Activated CD4-positive, alpha-beta memory T cell treated with anti-CD3 and anti-CD28 coated beads for 36 hours (primary cell): ENCODE measurements at regions of chr12 and their contacts with region 1.

Region 1: DNA sequence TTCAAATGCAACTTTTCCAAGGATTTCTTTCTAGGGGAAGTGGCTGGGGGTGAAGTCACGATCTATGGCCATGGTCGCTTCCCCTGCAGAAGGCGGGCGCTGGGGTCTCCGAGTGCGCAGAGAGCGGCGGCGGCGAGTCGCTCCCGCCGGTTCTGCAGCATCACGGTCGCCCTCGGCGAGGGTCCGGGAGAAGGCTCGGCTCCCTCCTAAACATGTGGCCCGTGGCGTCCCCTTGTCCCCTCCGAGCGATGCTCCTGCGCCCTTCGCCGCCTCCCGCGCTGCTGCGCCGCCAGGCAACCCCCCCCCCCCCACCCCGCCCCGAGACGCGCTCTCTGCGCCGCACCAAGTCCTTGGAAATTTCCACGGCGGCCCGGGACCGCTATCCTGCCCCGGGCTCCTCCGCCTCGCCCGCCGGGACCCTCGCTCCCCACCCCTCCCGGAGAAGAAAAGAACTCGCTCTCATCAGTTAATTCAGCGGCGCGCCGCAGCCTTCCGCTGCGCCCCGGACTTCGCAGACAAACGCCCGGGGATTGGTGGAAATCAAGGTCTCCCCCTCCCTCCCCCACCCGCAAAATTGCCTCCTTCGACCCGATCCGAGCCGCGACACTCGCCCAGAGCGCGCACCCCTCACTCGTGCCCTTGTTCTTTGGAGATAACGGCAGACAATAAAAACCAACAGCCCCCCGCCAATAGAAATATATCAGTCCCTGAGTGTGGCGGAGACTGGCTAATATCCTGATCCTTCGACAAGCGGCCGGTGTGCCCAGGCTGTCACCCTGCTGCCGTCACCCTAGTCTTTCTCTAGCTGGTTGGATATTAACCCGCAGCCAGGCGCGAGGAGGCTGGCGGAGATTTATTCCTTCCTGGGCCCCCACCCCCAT is at the start of gene ST8SIA1:
- DNase-seq: peak; percentile 78
- H3K4me3 Mint-ChIP-seq: peak within 1 kb of the TSS; percentile 90
- H3K27ac Mint-ChIP-seq: peak within 1 kb of the TSS; percentile 89
- H3K4me1 Mint-ChIP-seq: peaks cover 49% of the 10 kb centered on the region
- H3K27me3 Mint-ChIP-seq: no peaks in the 10 kb centered on the region
- total RNA-seq, gene ST8SIA1: 9.5 to 9.6 TPM

Region 2: GRCh38 chr12:21697904-21698630 is 636.6 kb before region 1 on chr12:
- CTCF ChIA-PET with region 1: interaction called, 8 read pairs
- POLR2A ChIA-PET with region 1: no interaction called
- intact Hi-C with region 1: loop called (anchors 5 kb)
- DNase-seq: no peak
- H3K4me3 Mint-ChIP-seq: no peak overlapping the region
- H3K27ac Mint-ChIP-seq: no peak overlapping the region
- H3K4me1 Mint-ChIP-seq: peaks cover 12% of the 10 kb centered on the region
- H3K27me3 Mint-ChIP-seq: no peaks in the 10 kb centered on the region

Region 3: DNA sequence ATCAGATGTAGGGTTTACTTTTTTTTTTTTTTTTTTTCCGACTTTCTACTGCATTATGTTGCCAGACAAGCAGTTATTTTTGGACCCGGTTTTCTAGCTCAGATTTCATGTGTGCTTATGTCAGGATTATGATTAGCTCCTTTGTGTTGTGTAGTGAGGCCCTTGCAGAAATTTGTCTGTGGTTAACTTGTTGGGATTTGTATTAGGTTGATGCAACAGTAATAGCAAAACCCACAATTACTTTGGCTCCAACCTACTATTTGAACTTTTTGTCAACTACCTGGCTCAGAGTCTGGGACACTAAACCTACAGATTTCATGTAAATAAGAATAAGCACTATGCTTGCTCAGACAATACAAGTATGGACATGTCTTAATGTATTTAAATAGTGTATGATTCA is 516.0 kb before region 1 on chr12:
- CTCF ChIA-PET with region 1: no interaction called
- POLR2A ChIA-PET with region 1: no interaction called
- intact Hi-C with region 1: no loop called
- DNase-seq: no peak
- H3K4me3 Mint-ChIP-seq: no peak overlapping the region
- H3K27ac Mint-ChIP-seq: no peak overlapping the region
- H3K4me1 Mint-ChIP-seq: no peaks in the 10 kb centered on the region
- H3K27me3 Mint-ChIP-seq: peaks cover 1% of the 10 kb centered on the region

Region 4: GRCh38 chr12:21971344-21971743 is 363.3 kb before region 1 on chr12:
- CTCF ChIA-PET with region 1: no interaction called
- POLR2A ChIA-PET with region 1: no interaction called
- intact Hi-C with region 1: no loop called
- DNase-seq: no peak
- H3K4me3 Mint-ChIP-seq: no peak overlapping the region
- H3K27ac Mint-ChIP-seq: no peak overlapping the region
- H3K4me1 Mint-ChIP-seq: no peaks in the 10 kb centered on the region
- H3K27me3 Mint-ChIP-seq: peaks cover 4% of the 10 kb centered on the region

Region 5: DNA sequence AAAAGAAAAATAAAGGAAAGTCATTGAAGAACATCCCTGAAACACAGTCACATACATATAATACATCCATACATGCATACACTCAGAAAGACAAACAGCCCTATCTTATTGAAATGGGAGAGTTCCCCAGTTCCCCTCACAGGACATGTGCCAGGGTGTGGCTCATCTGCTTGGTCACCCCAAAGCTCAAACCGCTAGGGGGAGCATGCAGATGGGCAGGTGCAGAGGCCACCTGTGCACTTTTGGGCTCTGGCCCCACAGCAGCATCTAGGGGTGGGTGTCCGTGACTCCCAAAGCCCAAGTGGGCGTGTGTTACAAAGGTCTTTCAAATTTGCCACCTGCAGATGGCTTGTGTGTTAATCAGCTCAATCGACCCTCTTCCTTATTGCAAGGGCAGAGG is 213.4 kb before region 1 on chr12:
- CTCF ChIA-PET with region 1: interaction called, 10 read pairs
- POLR2A ChIA-PET with region 1: interaction called, 3 read pairs
- intact Hi-C with region 1: loop called (anchors 1 kb)
- DNase-seq: peak; percentile 62
- H3K4me3 Mint-ChIP-seq: no peak overlapping the region
- H3K27ac Mint-ChIP-seq: no peak overlapping the region
- H3K4me1 Mint-ChIP-seq: peaks cover 4% of the 10 kb centered on the region
- H3K27me3 Mint-ChIP-seq: no peaks in the 10 kb centered on the region

Region 6: GRCh38 chr12:22287776-22288621 is 46.7 kb before region 1 on chr12:
- CTCF ChIA-PET with region 1: interaction called, 22 read pairs
- POLR2A ChIA-PET with region 1: interaction called, 9 read pairs
- intact Hi-C with region 1: loop called (anchors 1 kb)
- DNase-seq: peak; percentile 73
- H3K4me3 Mint-ChIP-seq: peak overlapping the region; percentile 77
- H3K27ac Mint-ChIP-seq: peak overlapping the region; percentile 95
- H3K4me1 Mint-ChIP-seq: peaks cover 59% of the 10 kb centered on the region
- H3K27me3 Mint-ChIP-seq: no peaks in the 10 kb centered on the region

Region 7: GRCh38 chr12:22409377-22410164 is 74.9 kb after region 1 on chr12:
- CTCF ChIA-PET with region 1: interaction called, 18 read pairs
- POLR2A ChIA-PET with region 1: interaction called, 12 read pairs
- intact Hi-C with region 1: loop called (anchors 1 kb)
- DNase-seq: peak; percentile 78
- H3K4me3 Mint-ChIP-seq: peak overlapping the region; percentile 69
- H3K27ac Mint-ChIP-seq: peak overlapping the region; percentile 88
- H3K4me1 Mint-ChIP-seq: peaks cover 49% of the 10 kb centered on the region
- H3K27me3 Mint-ChIP-seq: no peaks in the 10 kb centered on the region

Region 8: DNA sequence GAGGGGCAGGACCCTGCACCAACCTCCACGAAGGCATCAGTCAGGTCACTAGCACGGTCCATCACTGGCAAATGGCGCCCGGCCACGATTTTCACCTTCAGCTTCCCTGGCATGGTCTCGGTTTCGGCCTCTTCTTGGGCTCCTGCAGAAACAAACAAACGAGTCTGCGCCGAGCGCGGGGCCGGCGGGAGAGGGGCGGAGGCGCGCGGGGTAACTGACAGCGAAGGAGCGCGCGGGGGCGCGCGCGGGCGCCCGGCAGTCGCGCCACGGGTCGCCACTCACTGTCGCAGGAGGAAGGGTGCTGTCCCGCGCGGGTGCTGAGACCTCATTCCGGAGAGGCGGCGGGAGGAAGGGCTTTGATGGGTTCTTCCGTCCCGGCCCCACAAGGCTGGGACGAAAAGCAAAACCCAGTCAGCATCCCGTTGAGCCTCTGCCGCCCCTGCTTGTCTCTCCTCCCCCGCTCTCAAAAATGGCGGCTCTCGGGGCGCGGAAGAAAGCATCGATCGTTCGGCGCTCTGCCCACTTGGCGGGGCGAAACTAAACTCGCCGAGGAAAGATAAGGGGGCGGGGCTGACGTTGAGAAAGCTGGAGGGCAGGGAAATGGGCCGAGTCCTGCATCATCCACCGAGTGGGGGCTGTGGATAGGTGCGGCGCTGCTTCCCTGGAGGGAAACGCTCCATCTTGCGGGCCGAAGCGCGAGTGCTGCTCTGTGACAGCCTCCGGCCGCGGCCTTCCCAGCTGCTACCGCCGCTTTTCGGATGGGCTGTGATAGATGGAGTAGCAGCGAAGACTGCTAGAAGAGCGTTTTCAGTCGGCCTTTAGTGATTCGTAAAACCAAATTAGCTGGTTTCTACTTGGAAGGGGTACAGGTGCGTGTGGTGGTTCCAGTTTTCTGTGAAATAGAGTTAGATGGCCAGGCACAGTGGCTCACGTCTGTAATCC is 209.7 kb after region 1 on chr12 and contains the start of gene C2CD5:
- CTCF ChIA-PET with region 1: no interaction called
- POLR2A ChIA-PET with region 1: no interaction called
- intact Hi-C with region 1: loop called (anchors 5 kb)
- DNase-seq: peak; percentile 97
- H3K4me3 Mint-ChIP-seq: peak within 1 kb of the TSS; percentile 95
- H3K27ac Mint-ChIP-seq: peak within 1 kb of the TSS; percentile 93
- H3K4me1 Mint-ChIP-seq: peaks cover 31% of the 10 kb centered on the region
- H3K27me3 Mint-ChIP-seq: no peaks in the 10 kb centered on the region
- total RNA-seq, gene C2CD5: 32.6 to 32.8 TPM